HCT116 (cell line): ENCODE measurements at regions of chr19 and their contacts with region 1.

Region 1: DNA sequence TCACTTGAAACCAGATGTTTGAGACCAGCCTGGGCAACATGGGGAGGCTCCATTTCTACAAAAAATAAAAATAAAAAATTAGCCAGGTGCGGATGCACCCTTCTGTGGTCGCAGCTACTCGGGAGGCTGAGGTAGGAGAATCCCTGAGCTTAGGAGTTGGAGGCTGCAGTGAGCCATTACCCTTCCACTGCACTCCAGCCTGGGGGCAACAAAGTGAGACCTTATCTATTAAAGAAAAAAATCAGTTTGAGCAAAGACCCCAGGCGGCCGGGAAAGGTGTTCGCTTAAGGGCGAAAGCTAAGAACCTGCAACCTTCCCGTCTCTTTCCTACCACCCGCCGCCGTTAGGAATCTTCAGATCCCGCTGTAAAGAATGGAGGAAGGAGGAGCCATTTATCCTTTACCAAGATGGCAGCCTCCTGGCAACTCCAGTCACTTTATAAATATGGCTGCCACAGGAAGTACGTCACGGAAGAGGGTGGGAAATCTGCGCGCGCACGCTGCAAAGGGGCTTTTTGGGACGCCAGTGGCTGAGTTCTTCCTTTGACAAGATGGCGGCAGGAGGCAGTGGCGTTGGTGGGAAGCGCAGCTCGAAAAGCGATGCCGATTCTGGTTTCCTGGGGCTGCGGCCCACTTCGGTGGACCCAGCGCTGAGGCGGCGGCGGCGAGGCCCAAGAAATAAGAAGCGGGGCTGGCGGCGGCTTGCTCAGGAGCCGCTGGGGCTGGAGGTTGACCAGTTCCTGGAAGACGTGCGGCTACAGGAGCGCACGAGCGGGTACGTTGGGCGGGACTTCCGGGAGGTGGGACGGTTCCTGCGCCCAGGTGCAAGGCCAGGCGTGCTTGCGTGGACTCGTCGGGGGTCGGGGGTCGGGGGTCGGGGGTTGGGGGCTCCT is at the start of gene NOP53:
- DNase-seq: peak; percentile 93
- ATAC-seq: peak; percentile 71
- H3K4me3 ChIP-seq: peak within 1 kb of the TSS; percentile 74 to 83
- H3K27ac ChIP-seq: peak within 1 kb of the TSS; percentile 85
- H3K4me1 ChIP-seq: peaks cover 25 to 43% of the 10 kb centered on the region in 2 experiments
- H3K27me3 ChIP-seq: no peaks in the 10 kb centered on the region
- CTCF ChIP-seq: peak in 1 of 3 experiments; percentile 1; a peak in 1 of 6 replicates
- POLR2A ChIP-seq: no peak
- RAD21 ChIP-seq: no peak
- total RNA-seq, gene NOP53: 322 TPM

Region 2: GRCh38 chr19:47729992-47730889 is 15.0 kb before region 1 on chr19:
- CTCF ChIA-PET with region 1: no interaction called
- POLR2A ChIA-PET with region 1: interaction called, 5 read pairs
- RAD21 ChIA-PET with region 1: no interaction called
- intact Hi-C with region 1: loop called (anchors 2 kb)
- DNase-seq: no peak
- ATAC-seq: peak; percentile 87
- H3K4me3 ChIP-seq: peak overlapping the region; percentile 49 to 58
- H3K27ac ChIP-seq: peak overlapping the region; percentile 98
- H3K4me1 ChIP-seq: peaks cover 35 to 57% of the 10 kb centered on the region in 2 experiments
- H3K27me3 ChIP-seq: no peaks in the 10 kb centered on the region
- CTCF ChIP-seq: no peak
- POLR2A ChIP-seq: no peak
- RAD21 ChIP-seq: no peak

Region 3: DNA sequence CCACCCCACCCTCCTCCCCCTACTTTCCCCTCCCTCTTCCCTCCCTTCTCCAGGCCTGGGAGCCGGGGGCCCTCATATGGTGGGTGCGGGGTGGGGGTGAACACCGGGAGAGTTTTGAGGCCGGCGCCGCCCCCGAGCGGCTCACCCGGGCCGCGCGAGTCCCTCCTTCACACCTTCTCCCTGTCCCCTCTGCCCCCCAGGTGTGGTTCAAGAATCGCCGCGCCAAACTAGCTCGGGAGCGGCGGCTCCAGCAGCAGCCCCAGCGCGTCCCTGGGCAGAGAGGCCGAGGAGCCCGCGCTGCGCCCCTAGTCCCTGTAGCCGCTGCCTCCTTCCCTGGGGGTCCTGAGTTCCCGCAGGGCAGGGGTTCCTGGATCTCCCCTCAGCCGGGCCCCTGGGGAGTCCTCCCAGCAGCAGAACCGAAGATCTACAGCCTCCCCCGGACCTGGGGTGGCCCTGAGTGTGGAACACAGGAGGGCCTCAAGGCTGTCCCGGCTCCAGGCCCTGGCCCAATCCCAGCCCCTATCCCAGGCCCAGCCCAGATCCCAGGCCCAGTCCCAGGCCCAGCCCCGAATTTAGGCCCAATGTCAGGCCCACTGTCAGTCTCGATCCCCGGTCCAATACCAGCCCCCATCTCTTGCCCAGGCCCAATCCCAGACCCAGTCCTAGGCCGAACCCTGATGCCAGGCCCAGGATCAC is 115.5 kb after region 1 on chr19:
- CTCF ChIA-PET with region 1: no interaction called
- POLR2A ChIA-PET with region 1: no interaction called
- RAD21 ChIA-PET with region 1: no interaction called
- intact Hi-C with region 1: no loop called
- DNase-seq: no peak
- ATAC-seq: no peak
- H3K4me3 ChIP-seq: no peak overlapping the region
- H3K27ac ChIP-seq: no peak overlapping the region
- H3K4me1 ChIP-seq: peaks cover 22 to 33% of the 10 kb centered on the region in 2 experiments
- H3K27me3 ChIP-seq: no peaks in the 10 kb centered on the region
- CTCF ChIP-seq: no peak
- POLR2A ChIP-seq: no peak
- RAD21 ChIP-seq: no peak